ENCODE measurements at regions of chr6 and their contacts with region 1.

Region 1: DNA sequence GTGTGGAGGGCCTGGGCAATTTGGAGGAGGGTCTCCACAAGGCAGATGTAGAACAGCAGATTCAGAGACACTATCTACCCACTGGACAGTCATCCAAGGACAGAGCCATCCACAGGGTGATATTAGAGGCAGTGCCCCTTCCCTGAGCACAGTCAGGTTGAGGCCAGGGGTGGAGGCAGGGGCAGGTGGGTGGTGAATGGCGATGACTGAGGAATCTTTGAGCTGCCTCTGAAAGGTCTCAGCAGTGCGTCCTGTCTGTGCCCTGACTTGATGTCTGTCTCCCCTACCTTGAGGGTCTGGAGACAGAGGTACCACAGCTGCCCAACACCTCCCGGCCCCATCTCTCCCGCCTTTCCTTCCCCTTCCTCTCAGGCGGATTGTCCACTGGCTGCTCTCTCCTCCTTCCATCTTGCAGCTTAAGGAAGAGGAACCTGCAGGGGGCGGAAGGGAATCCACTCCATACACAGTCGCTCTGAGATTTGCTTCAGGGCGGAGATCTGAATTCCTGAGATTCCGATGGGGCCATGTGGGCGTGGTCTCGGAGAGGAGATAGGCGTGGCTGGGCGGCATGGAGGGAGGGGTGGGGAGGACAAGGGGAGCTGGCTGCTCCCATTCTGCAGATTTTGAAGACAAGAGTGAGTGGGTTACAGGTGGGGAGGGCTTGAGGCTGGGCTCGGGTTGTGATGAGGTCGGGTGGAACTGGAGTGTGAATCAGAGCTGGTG is 1.7 kb downstream of the MUCL3 start:
- DNase-seq: peak; percentile 56
- H3K4me3 ChIP-seq: no peak overlapping the region
- H3K27ac ChIP-seq: no peak overlapping the region
- H3K4me1 ChIP-seq: peaks cover 11% of the 10 kb centered on the region
- H3K27me3 ChIP-seq: peaks cover 4% of the 10 kb centered on the region
- CTCF ChIP-seq: peak; percentile 59 to 83 (median 64)

Region 2: DNA sequence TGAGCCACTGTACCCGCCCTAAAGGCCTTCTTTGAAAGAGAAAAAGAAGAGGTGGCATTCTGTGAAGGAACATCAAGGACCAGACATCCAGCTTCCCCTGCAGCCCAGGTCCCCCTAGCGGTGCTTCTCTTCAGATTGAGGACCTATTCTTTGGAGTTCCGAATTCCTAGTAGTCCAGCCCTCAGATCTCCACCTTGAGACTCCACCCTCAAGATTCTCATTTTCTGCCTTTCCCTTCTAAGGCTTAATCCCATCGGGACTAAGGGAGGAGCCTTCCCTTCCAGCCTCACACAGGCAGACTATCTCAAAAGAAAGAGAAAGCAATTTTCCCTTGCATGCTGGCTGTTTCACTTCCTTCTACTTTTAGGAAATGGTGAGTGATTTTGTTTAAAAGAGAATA is 100.3 kb after region 1 on chr6:
- dilution Hi-C with region 1: no loop called
- DNase-seq: no peak
- H3K4me3 ChIP-seq: no peak overlapping the region
- H3K27ac ChIP-seq: no peak overlapping the region
- H3K4me1 ChIP-seq: no peaks in the 10 kb centered on the region
- H3K27me3 ChIP-seq: peaks cover 8% of the 10 kb centered on the region
- CTCF ChIP-seq: peak; percentile 50 to 61 (median 58)

Region 3: GRCh38 chr6:31068669-31069340 is 126.3 kb after region 1 on chr6:
- dilution Hi-C with region 1: loop called (anchors 25 kb)
- DNase-seq: no peak
- H3K4me3 ChIP-seq: no peak overlapping the region
- H3K27ac ChIP-seq: no peak overlapping the region
- H3K4me1 ChIP-seq: peaks cover 5% of the 10 kb centered on the region
- H3K27me3 ChIP-seq: no peaks in the 10 kb centered on the region
- CTCF ChIP-seq: peak; percentile 91 to 93 (median 92)

Measured in keratinocyte (primary cell).